Calu3 (cell line): ENCODE measurements at regions of chr17 and their contacts with region 1.

Region 1: GRCh38 chr17:41403798-41404671 is 6.6 kb upstream of the KRT31 start:
- DNase-seq: peak; percentile 81
- H3K4me3 Mint-ChIP-seq: peak overlapping the region; percentile 12
- H3K27ac Mint-ChIP-seq: peak overlapping the region; percentile 92
- H3K4me1 Mint-ChIP-seq: peaks cover 50% of the 10 kb centered on the region
- H3K27me3 Mint-ChIP-seq: no peaks in the 10 kb centered on the region
- CTCF ChIP-seq: no peak

Region 2: GRCh38 chr17:40909351-40909750 is 494.7 kb before region 1 on chr17:
- CTCF ChIA-PET with region 1: interaction called, 4 read pairs
- intact Hi-C with region 1: loop called (anchors 5 kb)
- DNase-seq: peak; percentile 99
- H3K4me3 Mint-ChIP-seq: no peak overlapping the region
- H3K27ac Mint-ChIP-seq: peak overlapping the region; percentile 86
- H3K4me1 Mint-ChIP-seq: peaks cover 94% of the 10 kb centered on the region
- H3K27me3 Mint-ChIP-seq: no peaks in the 10 kb centered on the region
- CTCF ChIP-seq: peak; percentile 98

Region 3: DNA sequence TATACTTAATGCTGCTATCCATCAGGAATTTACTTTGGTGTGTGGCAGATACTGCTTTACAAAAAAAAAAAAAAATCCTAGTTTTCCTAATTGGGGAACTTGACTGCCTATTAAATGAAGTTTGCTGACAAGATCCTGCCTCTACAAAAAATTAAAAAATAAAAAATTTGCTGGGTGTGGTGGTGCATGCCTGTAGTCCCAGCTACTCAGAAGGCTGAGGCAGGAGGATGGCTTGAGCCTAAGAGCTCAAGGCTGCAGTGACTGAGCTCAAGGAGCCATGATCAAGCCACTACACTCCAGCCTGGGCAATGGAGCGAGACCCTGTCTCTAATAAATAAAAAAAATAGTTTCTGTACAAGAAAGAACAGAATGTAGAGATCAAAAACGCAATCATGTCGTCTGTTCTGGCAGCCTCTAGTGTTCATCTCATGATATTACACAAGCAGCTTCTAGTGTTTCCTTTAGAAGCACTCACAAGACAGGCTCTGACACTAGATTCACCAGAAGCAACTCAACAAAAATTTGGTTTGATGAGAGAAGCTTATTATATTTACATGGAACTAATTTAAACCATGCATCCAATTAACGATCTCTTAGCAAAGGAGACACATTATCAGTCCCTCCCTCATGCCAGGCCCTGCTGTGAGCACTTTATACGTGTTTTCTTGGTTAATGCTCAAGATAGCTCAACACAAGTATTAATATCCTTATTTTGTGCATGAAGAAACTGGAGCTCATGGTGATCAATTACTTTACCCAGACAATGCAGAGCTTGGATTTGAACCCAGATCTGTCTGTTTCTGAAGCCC is 81.7 kb before region 1 on chr17:
- CTCF ChIA-PET with region 1: interaction called, 12 read pairs
- intact Hi-C with region 1: no loop called
- DNase-seq: no peak
- H3K4me3 Mint-ChIP-seq: no peak overlapping the region
- H3K27ac Mint-ChIP-seq: no peak overlapping the region
- H3K4me1 Mint-ChIP-seq: peaks cover 23% of the 10 kb centered on the region
- H3K27me3 Mint-ChIP-seq: no peaks in the 10 kb centered on the region
- CTCF ChIP-seq: peak; percentile 80

Region 4: GRCh38 chr17:41360296-41360995 is 43.6 kb before region 1 on chr17:
- CTCF ChIA-PET with region 1: interaction called, 4 read pairs
- intact Hi-C with region 1: loop called (anchors 5 kb)
- DNase-seq: peak; percentile 46
- H3K4me3 Mint-ChIP-seq: no peak overlapping the region
- H3K27ac Mint-ChIP-seq: peak overlapping the region; percentile 61
- H3K4me1 Mint-ChIP-seq: peaks cover 41% of the 10 kb centered on the region
- H3K27me3 Mint-ChIP-seq: no peaks in the 10 kb centered on the region
- CTCF ChIP-seq: no peak

Region 5: GRCh38 chr17:41417576-41418015 is 13.6 kb after region 1 on chr17:
- CTCF ChIA-PET with region 1: interaction called, 38 read pairs
- intact Hi-C with region 1: no loop called
- DNase-seq: peak; percentile 72
- H3K4me3 Mint-ChIP-seq: peak overlapping the region; percentile 29
- H3K27ac Mint-ChIP-seq: peak overlapping the region; percentile 84
- H3K4me1 Mint-ChIP-seq: peaks cover 72% of the 10 kb centered on the region
- H3K27me3 Mint-ChIP-seq: no peaks in the 10 kb centered on the region
- CTCF ChIP-seq: peak; percentile 91

Region 6: DNA sequence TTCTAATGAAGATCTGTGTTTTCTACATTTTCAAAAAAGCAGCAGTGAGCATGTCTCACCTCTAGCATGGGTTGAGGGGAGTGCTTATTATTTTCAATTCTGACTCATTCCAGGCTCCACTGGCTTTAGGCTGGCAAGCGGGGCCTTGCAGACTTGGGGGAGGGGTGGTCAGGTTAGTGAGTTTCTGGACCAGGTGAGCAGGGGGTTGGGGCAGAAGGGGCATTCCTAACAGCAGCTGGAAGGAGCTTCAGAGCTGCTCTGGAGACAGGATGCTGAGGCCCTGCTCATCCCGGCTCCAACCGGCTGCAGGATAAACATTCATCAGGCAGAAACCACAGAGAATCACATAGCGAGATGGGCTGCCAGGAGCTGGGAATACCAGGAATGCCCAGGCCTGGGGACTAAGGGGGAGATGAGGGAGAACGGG is 134.5 kb after region 1 on chr17:
- CTCF ChIA-PET with region 1: no interaction called
- intact Hi-C with region 1: no loop called
- DNase-seq: no peak
- H3K4me3 Mint-ChIP-seq: no peak overlapping the region
- H3K27ac Mint-ChIP-seq: no peak overlapping the region
- H3K4me1 Mint-ChIP-seq: peaks cover 86% of the 10 kb centered on the region
- H3K27me3 Mint-ChIP-seq: no peaks in the 10 kb centered on the region
- CTCF ChIP-seq: no peak